Activated CD4-positive, alpha-beta memory T cell treated with anti-CD3 and anti-CD28 coated beads for 36 hours (primary cell): ENCODE measurements at regions of chr17 and their contacts with region 1.

Region 1: GRCh38 chr17:59331129-59331928 is at the start of gene YPEL2:
- DNase-seq: peak; percentile 92
- H3K4me3 Mint-ChIP-seq: peak within 1 kb of the TSS; percentile 83
- H3K27ac Mint-ChIP-seq: peak within 1 kb of the TSS; percentile 64
- H3K4me1 Mint-ChIP-seq: peaks cover 60% of the 10 kb centered on the region
- H3K27me3 Mint-ChIP-seq: no peaks in the 10 kb centered on the region
- total RNA-seq, gene YPEL2: 7.6 to 9.4 TPM

Region 2: GRCh38 chr17:59296771-59297500 is 34.4 kb before region 1 on chr17:
- CTCF ChIA-PET with region 1: no interaction called
- POLR2A ChIA-PET with region 1: no interaction called
- intact Hi-C with region 1: no loop called
- DNase-seq: no peak
- H3K4me3 Mint-ChIP-seq: no peak overlapping the region
- H3K27ac Mint-ChIP-seq: no peak overlapping the region
- H3K4me1 Mint-ChIP-seq: no peaks in the 10 kb centered on the region
- H3K27me3 Mint-ChIP-seq: no peaks in the 10 kb centered on the region

Region 3: GRCh38 chr17:59311130-59311920 is 20.0 kb before region 1 on chr17:
- CTCF ChIA-PET with region 1: interaction called, 17 read pairs
- POLR2A ChIA-PET with region 1: no interaction called
- intact Hi-C with region 1: loop called (anchors 2 kb)
- DNase-seq: peak; percentile 39
- H3K4me3 Mint-ChIP-seq: no peak overlapping the region
- H3K27ac Mint-ChIP-seq: peak overlapping the region; percentile 5
- H3K4me1 Mint-ChIP-seq: peaks cover 3% of the 10 kb centered on the region
- H3K27me3 Mint-ChIP-seq: no peaks in the 10 kb centered on the region

Region 4: DNA sequence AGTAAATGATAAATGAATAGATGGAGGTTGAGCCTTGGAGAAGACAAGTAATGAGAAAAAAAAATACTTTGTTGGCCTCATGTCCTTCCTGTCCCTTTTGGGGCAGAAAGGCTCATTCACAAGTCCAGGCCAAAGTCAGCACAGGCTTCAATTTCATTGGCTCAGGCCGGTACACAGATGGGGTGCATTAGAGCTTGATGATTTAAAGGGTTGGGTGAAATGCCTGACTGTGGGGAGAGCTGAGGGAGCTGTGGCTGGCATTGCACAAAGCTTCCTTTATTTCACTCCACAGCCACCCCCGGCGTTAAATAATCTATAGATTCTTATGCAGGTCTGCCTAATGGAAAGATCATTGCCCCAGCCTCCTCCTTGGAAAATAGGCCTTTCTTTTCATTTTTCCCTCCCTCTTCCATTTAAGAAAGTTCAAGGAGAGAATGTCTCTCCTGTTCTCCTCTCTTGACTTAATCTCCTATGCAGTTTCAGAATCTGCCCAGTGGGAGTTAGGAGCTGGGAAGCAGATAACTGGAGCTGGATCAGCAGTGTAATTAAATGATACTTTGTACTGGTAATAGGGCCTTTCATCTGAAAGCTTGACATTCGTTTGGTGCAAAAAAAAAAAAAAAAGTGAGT is 24.5 kb after region 1 on chr17:
- CTCF ChIA-PET with region 1: interaction called, 12 read pairs
- POLR2A ChIA-PET with region 1: no interaction called
- intact Hi-C with region 1: no loop called
- DNase-seq: no peak
- H3K4me3 Mint-ChIP-seq: no peak overlapping the region
- H3K27ac Mint-ChIP-seq: no peak overlapping the region
- H3K4me1 Mint-ChIP-seq: peaks cover 62% of the 10 kb centered on the region
- H3K27me3 Mint-ChIP-seq: no peaks in the 10 kb centered on the region

Region 5: GRCh38 chr17:59427425-59427921 is 96.1 kb after region 1 on chr17:
- CTCF ChIA-PET with region 1: interaction called, 59 read pairs
- POLR2A ChIA-PET with region 1: interaction called, 7 read pairs
- intact Hi-C with region 1: no loop called
- DNase-seq: peak; percentile 82
- H3K4me3 Mint-ChIP-seq: no peak overlapping the region
- H3K27ac Mint-ChIP-seq: no peak overlapping the region
- H3K4me1 Mint-ChIP-seq: peaks cover 33% of the 10 kb centered on the region
- H3K27me3 Mint-ChIP-seq: peaks cover under 1% of the 10 kb centered on the region

Region 6: DNA sequence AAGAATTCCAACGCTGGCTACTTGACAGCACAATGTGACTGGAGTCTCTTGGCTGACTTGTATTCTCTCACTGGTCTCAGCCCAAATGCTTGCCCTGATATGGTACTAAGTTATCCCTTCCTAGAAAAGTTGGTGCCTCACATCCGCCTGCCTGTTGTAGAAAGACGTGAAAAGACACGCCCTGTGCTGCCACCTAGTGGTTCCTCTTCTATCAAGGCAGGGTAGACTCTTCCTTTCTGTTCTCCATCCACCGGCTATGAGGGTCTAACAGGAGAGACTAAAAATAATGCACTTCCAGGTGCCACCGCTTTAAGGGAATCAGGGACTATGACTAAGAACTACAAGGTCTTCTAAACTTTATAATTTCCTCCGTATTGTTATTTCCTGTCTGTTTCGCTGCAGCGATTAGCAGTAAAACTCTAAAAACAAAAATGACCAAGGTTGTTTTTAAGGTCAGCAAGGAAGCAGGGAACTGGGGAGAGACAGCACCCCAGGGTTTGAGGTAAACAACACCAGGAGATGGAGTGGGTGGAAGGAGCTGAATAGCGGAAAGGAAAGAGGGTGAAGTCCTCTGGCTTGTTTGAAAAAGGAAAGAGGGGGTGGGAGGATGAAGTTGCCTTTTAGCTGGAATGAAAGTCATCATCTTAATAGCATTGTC is 109.6 kb after region 1 on chr17:
- CTCF ChIA-PET with region 1: interaction called, 141 read pairs
- POLR2A ChIA-PET with region 1: interaction called, 5 read pairs
- intact Hi-C with region 1: loop called (anchors 1 kb)
- DNase-seq: peak; percentile 92
- H3K4me3 Mint-ChIP-seq: peak overlapping the region; percentile 59
- H3K27ac Mint-ChIP-seq: peak overlapping the region; percentile 91
- H3K4me1 Mint-ChIP-seq: peaks cover 54% of the 10 kb centered on the region
- H3K27me3 Mint-ChIP-seq: no peaks in the 10 kb centered on the region